ENCODE measurements at regions of chr14 and their contacts with region 1.

Region 1: GRCh38 chr14:65412032-65412846 is at the start of gene FUT8:
- DNase-seq: peak; percentile 96
- ATAC-seq: peak; percentile 84
- H3K4me3 ChIP-seq: peak within 1 kb of the TSS; percentile 77 to 97 (median 95)
- H3K4me3 Mint-ChIP-seq: peak within 1 kb of the TSS; percentile 94
- H3K27ac ChIP-seq: peak within 1 kb of the TSS; percentile 81 to 82
- H3K27ac Mint-ChIP-seq: peak within 1 kb of the TSS; percentile 96
- H3K4me1 ChIP-seq: peaks cover 13 to 20% of the 10 kb centered on the region in 2 donors
- H3K4me1 Mint-ChIP-seq: peaks cover 43% of the 10 kb centered on the region
- H3K27me3 ChIP-seq: no peaks in the 10 kb centered on the region
- H3K27me3 Mint-ChIP-seq: no peaks in the 10 kb centered on the region
- CTCF ChIP-seq: peak; percentile 70
- total RNA-seq, gene FUT8: 91.8 and 94.6 TPM in 2 replicates

Region 2: GRCh38 chr14:64986578-64987571 is 425.4 kb before region 1 on chr14 and contains the start of gene FNTB:
- CTCF ChIA-PET with region 1: interaction called, 4 read pairs
- POLR2A ChIA-PET with region 1: no interaction called
- intact Hi-C with region 1: loop called (anchors 2 kb)
- DNase-seq: peak; percentile 98
- ATAC-seq: peak; percentile 90
- H3K4me3 ChIP-seq: peak within 1 kb of the TSS; percentile 63 to 92 (median 84)
- H3K4me3 Mint-ChIP-seq: peak within 1 kb of the TSS; percentile 100
- H3K27ac ChIP-seq: peak within 1 kb of the TSS; percentile 65 to 70
- H3K27ac Mint-ChIP-seq: peak within 1 kb of the TSS; percentile 98
- H3K4me1 ChIP-seq: peaks cover 25% of the 10 kb centered on the region in 2 donors
- H3K4me1 Mint-ChIP-seq: peaks cover 41% of the 10 kb centered on the region
- H3K27me3 ChIP-seq: peaks cover 0 to 6% (median 3%) of the 10 kb centered on the region in 4 experiments
- H3K27me3 Mint-ChIP-seq: peaks cover 18% of the 10 kb centered on the region
- CTCF ChIP-seq: peak; percentile 79
- total RNA-seq, gene FNTB: 7.7 and 10.2 TPM in 2 replicates

Region 3: GRCh38 chr14:65109357-65109756 is 302.9 kb before region 1 on chr14:
- CTCF ChIA-PET with region 1: no interaction called
- POLR2A ChIA-PET with region 1: no interaction called
- intact Hi-C with region 1: no loop called
- DNase-seq: no peak
- ATAC-seq: no peak
- H3K4me3 ChIP-seq: no peak overlapping the region
- H3K4me3 Mint-ChIP-seq: no peak overlapping the region
- H3K27ac ChIP-seq: no peak overlapping the region
- H3K27ac Mint-ChIP-seq: no peak overlapping the region
- H3K4me1 ChIP-seq: no peaks in the 10 kb centered on the region
- H3K4me1 Mint-ChIP-seq: no peaks in the 10 kb centered on the region
- H3K27me3 ChIP-seq: no peaks in the 10 kb centered on the region
- H3K27me3 Mint-ChIP-seq: no peaks in the 10 kb centered on the region
- CTCF ChIP-seq: no peak

Region 4: DNA sequence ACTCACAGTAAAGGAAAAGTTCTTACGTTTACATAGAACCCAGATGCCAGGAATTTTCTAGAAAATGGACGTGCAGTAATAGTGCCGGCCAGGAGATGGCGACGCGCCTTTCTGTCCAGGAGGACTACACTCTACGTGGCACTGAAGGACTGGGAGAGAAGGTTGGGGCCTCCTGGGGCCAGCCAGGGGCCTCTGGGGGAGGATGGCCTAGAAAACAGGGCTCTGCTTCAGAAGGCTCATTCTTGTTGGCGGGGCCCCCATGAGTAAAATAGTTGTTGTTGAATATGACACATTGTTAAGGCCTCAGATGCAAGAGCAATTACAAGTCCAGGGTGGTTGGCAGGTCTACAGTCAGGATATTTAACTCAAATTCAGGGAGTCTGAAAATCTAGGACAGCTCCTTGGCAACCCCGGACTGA is 189.8 kb before region 1 on chr14:
- CTCF ChIA-PET with region 1: interaction called, 135 read pairs
- POLR2A ChIA-PET with region 1: interaction called, 5 read pairs
- intact Hi-C with region 1: loop called (anchors 1 kb)
- DNase-seq: peak; percentile 72
- ATAC-seq: peak; percentile 89
- H3K4me3 ChIP-seq: no peak overlapping the region
- H3K4me3 Mint-ChIP-seq: no peak overlapping the region
- H3K27ac ChIP-seq: no peak overlapping the region
- H3K27ac Mint-ChIP-seq: peak overlapping the region; percentile 39
- H3K4me1 ChIP-seq: peaks cover 42 to 56% of the 10 kb centered on the region in 2 donors
- H3K4me1 Mint-ChIP-seq: peaks cover 49% of the 10 kb centered on the region
- H3K27me3 ChIP-seq: no peaks in the 10 kb centered on the region
- H3K27me3 Mint-ChIP-seq: no peaks in the 10 kb centered on the region
- CTCF ChIP-seq: peak; percentile 87

Region 5: GRCh38 chr14:65287264-65288131 is 124.7 kb before region 1 on chr14:
- CTCF ChIA-PET with region 1: interaction called, 153 read pairs
- POLR2A ChIA-PET with region 1: interaction called, 51 read pairs
- intact Hi-C with region 1: loop called (anchors 1 kb)
- DNase-seq: peak; percentile 75
- ATAC-seq: peak; percentile 59
- H3K4me3 ChIP-seq: peak overlapping the region in 3 of 5 experiments; percentile 3 to 38 (median 16)
- H3K4me3 Mint-ChIP-seq: peak overlapping the region; percentile 70
- H3K27ac ChIP-seq: peak overlapping the region; percentile 89 to 95
- H3K27ac Mint-ChIP-seq: peak overlapping the region; percentile 95
- H3K4me1 ChIP-seq: peaks cover 75 to 87% of the 10 kb centered on the region in 2 donors
- H3K4me1 Mint-ChIP-seq: peaks cover 81% of the 10 kb centered on the region
- H3K27me3 ChIP-seq: no peaks in the 10 kb centered on the region
- H3K27me3 Mint-ChIP-seq: no peaks in the 10 kb centered on the region
- CTCF ChIP-seq: no peak

Region 6: DNA sequence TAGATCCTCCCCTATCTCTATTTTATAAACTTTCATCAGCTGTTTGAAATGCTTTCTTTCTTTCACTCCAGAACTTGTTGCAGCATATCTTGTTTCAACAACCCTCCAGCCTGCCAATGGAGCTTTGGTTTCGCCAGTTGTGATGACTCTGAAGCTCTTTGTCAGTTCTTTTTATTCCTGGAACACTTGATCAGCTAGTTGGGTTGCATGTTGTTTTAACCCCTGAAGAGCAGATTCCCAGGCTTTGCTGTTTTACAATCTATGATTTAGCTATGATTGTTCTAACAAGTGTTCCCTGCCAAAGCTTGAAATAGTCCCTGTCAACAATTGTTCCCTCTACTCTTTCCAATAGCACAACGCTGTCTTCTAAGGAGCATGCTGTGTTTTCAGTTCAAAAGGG is 50.3 kb before region 1 on chr14:
- CTCF ChIA-PET with region 1: interaction called, 10 read pairs
- POLR2A ChIA-PET with region 1: no interaction called
- intact Hi-C with region 1: no loop called
- DNase-seq: no peak
- ATAC-seq: no peak
- H3K4me3 ChIP-seq: no peak overlapping the region
- H3K4me3 Mint-ChIP-seq: no peak overlapping the region
- H3K27ac ChIP-seq: no peak overlapping the region
- H3K27ac Mint-ChIP-seq: no peak overlapping the region
- H3K4me1 ChIP-seq: peaks cover 27 to 35% of the 10 kb centered on the region in 2 donors
- H3K4me1 Mint-ChIP-seq: peaks cover 39% of the 10 kb centered on the region
- H3K27me3 ChIP-seq: no peaks in the 10 kb centered on the region
- H3K27me3 Mint-ChIP-seq: no peaks in the 10 kb centered on the region
- CTCF ChIP-seq: no peak

Region 7: DNA sequence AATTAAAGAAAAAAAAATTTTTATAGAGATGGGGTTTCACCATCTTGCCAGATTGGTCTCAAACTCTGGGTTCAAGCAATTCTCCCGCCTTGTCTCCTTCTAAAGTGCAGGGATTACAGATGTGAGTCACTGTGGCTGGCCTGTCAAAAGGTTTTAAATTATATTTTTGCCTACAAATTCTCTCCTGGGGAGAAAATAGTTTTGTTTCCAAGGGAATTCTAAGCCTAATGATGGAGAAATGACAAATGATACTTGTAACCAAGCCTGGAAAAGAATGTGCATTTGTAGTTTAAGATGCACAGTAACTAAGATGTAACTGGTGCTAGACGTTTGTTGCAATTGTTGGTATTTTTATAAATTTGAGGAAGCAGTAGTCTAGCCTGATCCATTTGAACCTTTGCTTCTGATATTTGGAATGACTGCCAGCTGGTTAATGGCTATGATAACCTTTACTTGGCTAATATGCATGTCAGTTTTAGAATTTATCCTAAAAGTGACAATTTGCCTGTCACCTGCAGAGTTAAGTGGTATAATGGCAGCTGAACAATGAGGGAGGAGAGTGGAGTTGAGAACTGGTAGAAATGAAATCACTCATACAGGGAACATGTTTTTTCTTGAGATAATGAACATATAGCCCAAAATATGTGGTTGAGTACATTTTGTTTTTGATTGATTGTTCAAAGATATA is 148.2 kb after region 1 on chr14:
- CTCF ChIA-PET with region 1: no interaction called
- POLR2A ChIA-PET with region 1: no interaction called
- intact Hi-C with region 1: no loop called
- DNase-seq: no peak
- ATAC-seq: no peak
- H3K4me3 ChIP-seq: no peak overlapping the region
- H3K4me3 Mint-ChIP-seq: no peak overlapping the region
- H3K27ac ChIP-seq: no peak overlapping the region
- H3K27ac Mint-ChIP-seq: no peak overlapping the region
- H3K4me1 ChIP-seq: peaks cover under 1 to 2% of the 10 kb centered on the region in 2 donors
- H3K4me1 Mint-ChIP-seq: peaks cover 17% of the 10 kb centered on the region
- H3K27me3 ChIP-seq: no peaks in the 10 kb centered on the region
- H3K27me3 Mint-ChIP-seq: no peaks in the 10 kb centered on the region
- CTCF ChIP-seq: no peak

Region 8: DNA sequence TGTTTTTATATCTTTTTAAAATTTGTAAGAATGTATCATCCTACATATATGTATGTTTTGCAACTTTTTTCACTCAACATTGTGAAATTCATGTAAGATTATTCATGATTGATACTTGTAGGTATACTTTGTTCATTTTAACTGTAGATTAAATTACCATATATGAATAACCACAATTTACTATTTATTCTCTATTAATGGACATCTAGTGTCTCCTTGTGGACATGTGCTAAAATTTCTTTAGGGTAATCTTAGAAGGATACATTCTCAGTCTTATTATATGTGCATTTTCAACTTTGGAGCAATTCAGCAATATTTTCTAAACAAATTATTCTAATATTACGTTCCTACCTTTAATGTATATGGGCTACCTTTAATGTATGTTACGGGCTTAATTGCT is 192.7 kb after region 1 on chr14:
- CTCF ChIA-PET with region 1: interaction called, 7 read pairs
- POLR2A ChIA-PET with region 1: no interaction called
- intact Hi-C with region 1: loop called (anchors 2 kb)
- DNase-seq: peak; percentile 22
- ATAC-seq: no peak
- H3K4me3 ChIP-seq: peak overlapping the region in 1 of 5 experiments; percentile 21
- H3K4me3 Mint-ChIP-seq: no peak overlapping the region
- H3K27ac ChIP-seq: peak overlapping the region in 1 of 2 donors; percentile 61
- H3K27ac Mint-ChIP-seq: no peak overlapping the region
- H3K4me1 ChIP-seq: peaks cover 11 to 18% of the 10 kb centered on the region in 2 donors
- H3K4me1 Mint-ChIP-seq: peaks cover 12% of the 10 kb centered on the region
- H3K27me3 ChIP-seq: no peaks in the 10 kb centered on the region
- H3K27me3 Mint-ChIP-seq: no peaks in the 10 kb centered on the region
- CTCF ChIP-seq: peak; percentile 70

Region 9: DNA sequence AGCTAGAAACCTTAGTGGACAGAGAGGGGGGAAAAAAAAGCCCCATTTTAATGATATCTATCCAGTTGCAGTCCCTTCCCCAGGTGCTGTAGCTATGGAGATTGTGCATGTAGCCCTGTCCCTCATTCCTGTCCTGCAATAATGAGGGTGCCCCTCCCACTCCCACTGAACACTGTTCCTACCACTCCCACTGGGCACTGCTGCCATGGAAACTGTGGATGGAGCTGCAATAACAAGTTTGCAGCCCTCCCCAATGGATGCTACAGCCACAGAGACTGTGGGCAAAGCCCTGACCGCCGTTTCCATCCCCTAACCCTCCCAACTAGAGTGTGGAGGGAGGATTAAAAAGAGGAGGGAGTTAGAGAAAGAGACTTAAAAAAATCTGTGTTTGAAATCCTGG is 238.6 kb after region 1 on chr14:
- CTCF ChIA-PET with region 1: no interaction called
- POLR2A ChIA-PET with region 1: no interaction called
- intact Hi-C with region 1: no loop called
- DNase-seq: no peak
- ATAC-seq: no peak
- H3K4me3 ChIP-seq: no peak overlapping the region
- H3K4me3 Mint-ChIP-seq: no peak overlapping the region
- H3K27ac ChIP-seq: no peak overlapping the region
- H3K27ac Mint-ChIP-seq: no peak overlapping the region
- H3K4me1 ChIP-seq: no peaks in the 10 kb centered on the region
- H3K4me1 Mint-ChIP-seq: no peaks in the 10 kb centered on the region
- H3K27me3 ChIP-seq: no peaks in the 10 kb centered on the region
- H3K27me3 Mint-ChIP-seq: no peaks in the 10 kb centered on the region
- CTCF ChIP-seq: no peak

Region 10: DNA sequence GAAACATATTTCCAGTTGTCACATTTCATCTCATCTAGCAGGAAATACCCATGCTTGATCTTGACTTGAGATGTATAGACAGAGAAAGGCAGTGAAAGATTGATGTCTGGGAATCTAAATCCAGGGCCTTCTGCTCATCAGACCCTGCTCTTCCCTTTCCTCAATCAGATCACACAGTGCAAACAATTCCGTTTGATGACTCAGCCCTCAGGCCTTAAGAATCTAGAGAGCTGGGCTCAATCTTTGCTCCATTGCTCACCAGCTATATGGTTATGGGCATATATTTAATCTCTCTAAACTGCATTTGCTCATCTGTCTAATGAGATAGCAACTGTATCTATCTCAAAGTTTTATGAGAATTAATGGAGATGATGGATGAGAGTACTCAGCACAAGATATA is 872.1 kb after region 1 on chr14:
- CTCF ChIA-PET with region 1: no interaction called
- POLR2A ChIA-PET with region 1: no interaction called
- intact Hi-C with region 1: no loop called
- DNase-seq: no peak
- ATAC-seq: no peak
- H3K4me3 ChIP-seq: no peak overlapping the region
- H3K4me3 Mint-ChIP-seq: no peak overlapping the region
- H3K27ac ChIP-seq: no peak overlapping the region
- H3K27ac Mint-ChIP-seq: no peak overlapping the region
- H3K4me1 ChIP-seq: no peaks in the 10 kb centered on the region
- H3K4me1 Mint-ChIP-seq: no peaks in the 10 kb centered on the region
- H3K27me3 ChIP-seq: no peaks in the 10 kb centered on the region
- H3K27me3 Mint-ChIP-seq: peaks cover 7% of the 10 kb centered on the region
- CTCF ChIP-seq: no peak

Region 11: DNA sequence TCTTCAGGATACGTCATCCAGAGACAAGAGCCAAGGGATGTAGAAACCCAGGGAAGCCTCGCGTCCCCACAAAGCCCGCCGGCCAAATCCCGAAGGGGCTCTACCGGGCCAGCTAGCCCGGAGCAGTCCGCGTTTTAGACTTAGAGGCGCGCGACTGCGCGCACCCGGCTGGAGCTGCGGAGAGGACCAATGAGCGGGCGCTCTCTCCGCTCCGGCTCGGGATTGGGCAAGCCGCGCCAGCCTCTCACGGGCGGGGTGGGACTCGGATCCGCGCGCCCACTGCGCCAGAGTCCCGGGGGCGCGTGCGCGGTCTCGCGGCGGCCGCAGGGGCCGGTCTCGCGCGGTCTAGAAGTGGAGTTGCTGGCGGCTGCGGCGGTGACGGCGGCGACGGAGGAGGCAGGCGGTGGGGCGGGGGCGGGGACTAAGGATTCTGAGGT is 1828.8 kb after region 1 on chr14:
- CTCF ChIA-PET with region 1: no interaction called
- POLR2A ChIA-PET with region 1: no interaction called
- intact Hi-C with region 1: loop called (anchors 10 kb)
- DNase-seq: peak; percentile 95
- ATAC-seq: peak; percentile 93
- H3K4me3 ChIP-seq: peak overlapping the region; percentile 56 to 94 (median 77)
- H3K4me3 Mint-ChIP-seq: peak overlapping the region; percentile 80
- H3K27ac ChIP-seq: peak overlapping the region; percentile 65 to 77
- H3K27ac Mint-ChIP-seq: peak overlapping the region; percentile 89
- H3K4me1 ChIP-seq: peaks cover 9 to 10% of the 10 kb centered on the region in 2 donors
- H3K4me1 Mint-ChIP-seq: peaks cover 15% of the 10 kb centered on the region
- H3K27me3 ChIP-seq: no peaks in the 10 kb centered on the region
- H3K27me3 Mint-ChIP-seq: no peaks in the 10 kb centered on the region
- CTCF ChIP-seq: no peak